Mucosa of descending colon (tissue), 3 donors: ENCODE measurements at regions of chr11 and their contacts with region 1.

Region 1: GRCh38 chr11:46392421-46393230 is 1.1 kb upstream of the CHRM4 start:
- DNase-seq: peak; percentile 86 to 92 (median 88)
- ATAC-seq: peak; percentile 88
- H3K4me3 ChIP-seq: no peak overlapping the region
- H3K4me1 ChIP-seq: peaks cover 40% of the 10 kb centered on the region
- CTCF ChIP-seq: no peak

Region 2: GRCh38 chr11:46529928-46530574 is 137.4 kb after region 1 on chr11:
- intact Hi-C with region 1: loop called (anchors 5 kb)
- DNase-seq: no peak
- ATAC-seq: no peak
- H3K4me3 ChIP-seq: no peak overlapping the region
- H3K4me1 ChIP-seq: peaks cover 4% of the 10 kb centered on the region
- CTCF ChIP-seq: no peak